GM10248 (cell line): ENCODE measurements at regions of chr1 and their contacts with region 1.

Region 1: GRCh38 chr1:58546520-58547308 is at the start of gene OMA1:
- DNase-seq: peak; percentile 97
- CTCF ChIP-seq: peak; percentile 98

Region 2: DNA sequence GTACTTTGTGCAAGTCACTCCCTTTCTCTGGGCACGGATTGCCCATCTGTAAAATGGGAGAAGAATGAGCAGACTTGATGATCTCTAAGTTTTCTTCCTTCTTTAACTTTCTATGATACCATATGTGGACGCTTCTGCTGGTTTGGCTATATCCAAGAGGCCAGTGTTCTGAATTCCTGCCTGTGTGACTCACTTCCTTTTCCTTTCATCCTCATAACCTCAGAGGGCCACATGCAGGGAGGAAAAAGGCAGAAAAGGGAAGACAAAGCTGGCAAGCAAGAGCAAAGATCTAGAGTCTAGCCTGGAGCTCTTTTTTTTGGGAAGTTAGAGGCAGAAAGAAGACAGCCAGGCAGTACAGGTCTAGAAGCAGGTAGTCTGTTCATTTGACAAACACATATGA is 151.4 kb before region 1 on chr1:
- CTCF ChIA-PET with region 1: interaction called, 3 read pairs
- POLR2A ChIA-PET with region 1: interaction called, 10 read pairs
- DNase-seq: no peak
- CTCF ChIP-seq: no peak

Region 3: GRCh38 chr1:58515794-58516401 is 30.8 kb before region 1 on chr1:
- CTCF ChIA-PET with region 1: interaction called, 60 read pairs
- POLR2A ChIA-PET with region 1: no interaction called
- DNase-seq: peak; percentile 40
- CTCF ChIP-seq: peak; percentile 64

Region 4: DNA sequence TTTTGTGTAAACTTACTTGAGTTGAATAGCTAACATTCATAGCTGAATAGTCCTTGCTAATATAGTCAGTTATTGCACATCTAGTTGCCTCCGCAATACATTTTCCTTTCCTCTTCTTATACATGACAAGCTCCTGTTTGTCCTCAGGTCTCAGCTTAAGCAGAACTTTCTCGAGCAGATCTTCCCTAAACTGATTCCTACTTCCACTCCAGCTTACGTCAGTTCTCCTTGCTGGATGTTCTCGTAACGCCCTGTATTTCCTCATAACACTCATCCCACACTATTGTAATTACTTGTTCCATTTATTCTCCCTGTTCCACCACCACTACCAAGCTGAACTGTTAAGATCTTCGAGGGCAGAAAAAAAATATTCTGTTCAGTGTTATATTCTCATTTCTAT is 14.9 kb after region 1 on chr1:
- CTCF ChIA-PET with region 1: interaction called, 10 read pairs
- POLR2A ChIA-PET with region 1: no interaction called
- DNase-seq: no peak
- CTCF ChIP-seq: no peak

Region 5: GRCh38 chr1:58573705-58574591 is 27.2 kb after region 1 on chr1:
- CTCF ChIA-PET with region 1: interaction called, 19 read pairs
- POLR2A ChIA-PET with region 1: interaction called, 3 read pairs
- DNase-seq: peak; percentile 76
- CTCF ChIP-seq: no peak

Region 6: DNA sequence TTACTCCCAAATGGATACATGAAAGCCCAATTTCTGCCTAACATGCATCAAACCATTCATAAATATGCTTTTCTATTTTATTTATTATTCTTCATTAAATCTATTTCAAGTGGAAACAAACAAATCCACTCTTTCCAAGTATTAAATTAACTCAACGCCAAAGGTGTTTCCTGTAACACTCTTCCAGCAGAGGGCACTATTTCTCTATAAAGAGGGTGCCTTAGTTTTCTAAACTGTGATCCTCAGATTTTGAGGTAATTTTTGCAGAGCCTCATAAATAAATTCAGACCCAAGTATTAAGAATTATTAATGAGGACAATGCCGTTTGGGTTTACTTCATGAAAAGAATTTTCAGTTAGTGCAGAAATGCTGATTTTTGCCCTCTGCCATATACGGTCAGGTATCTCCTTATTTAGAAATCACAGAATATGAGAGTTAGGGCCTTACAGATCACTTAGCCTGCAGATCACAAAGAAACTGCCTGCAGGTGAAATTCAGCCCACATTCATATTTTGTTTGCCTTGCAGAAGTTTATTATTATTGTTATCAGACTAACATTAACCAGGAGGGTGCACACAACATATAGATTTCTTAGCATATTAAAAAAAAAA is 193.2 kb after region 1 on chr1:
- CTCF ChIA-PET with region 1: no interaction called
- POLR2A ChIA-PET with region 1: no interaction called
- DNase-seq: peak; percentile 70
- CTCF ChIP-seq: peak; percentile 56